Posterior vena cava (tissue), 2 donors: ENCODE measurements at regions of chr2 and their contacts with region 1.

Region 1: DNA sequence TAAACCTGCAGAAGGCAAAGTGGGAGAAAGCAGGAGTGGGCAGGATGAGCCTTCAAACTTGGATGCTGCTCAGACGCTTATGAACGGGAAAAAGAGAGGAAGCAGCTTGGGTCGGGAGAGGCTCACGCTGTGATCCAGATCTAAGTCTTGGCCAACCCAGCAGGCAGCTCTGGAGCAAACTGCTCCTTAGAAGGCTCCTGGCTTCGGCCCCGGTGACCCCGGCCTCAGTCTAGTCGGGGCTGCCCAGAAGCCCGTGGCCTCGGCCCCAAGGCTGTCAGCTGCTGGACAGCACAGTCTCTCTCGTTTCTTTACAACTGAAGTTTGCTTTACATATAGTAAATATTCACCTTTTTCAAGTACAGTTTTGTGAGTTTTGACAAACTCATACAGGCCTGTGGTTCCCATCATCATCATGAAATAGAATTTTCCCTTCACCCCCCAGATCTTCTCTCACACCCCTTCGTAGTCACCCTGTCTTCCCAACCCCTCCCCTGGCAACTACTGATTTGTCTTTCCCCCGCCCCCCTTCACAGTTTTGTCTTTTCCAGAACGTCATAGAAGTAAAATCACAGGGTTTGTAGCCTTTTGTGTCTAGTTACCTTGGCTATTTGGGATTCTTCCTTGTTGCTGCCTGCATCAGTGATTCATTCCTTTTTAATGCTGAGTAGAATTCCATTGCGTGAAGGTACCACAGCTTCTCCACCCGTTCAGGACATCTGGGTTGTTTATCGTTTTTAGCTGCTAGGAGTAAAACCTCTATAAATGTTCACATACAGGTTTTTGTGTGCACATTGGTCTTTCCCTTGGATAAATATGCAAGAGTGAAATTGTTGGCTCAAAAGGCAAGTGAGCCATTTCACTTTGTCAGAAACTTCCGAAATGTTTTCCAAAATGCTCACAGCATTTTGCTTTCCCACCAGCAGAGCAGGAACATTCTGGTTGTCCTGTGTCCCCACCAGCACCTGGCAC is 35.1 kb downstream of the MYO7B start:
- DNase-seq: no peak

Region 2: GRCh38 chr2:127078666-127079270 is 491.8 kb before region 1 on chr2:
- intact Hi-C with region 1: loop called in 1 of 2 experiments (anchors 5 kb)
- DNase-seq: no peak

Region 3: DNA sequence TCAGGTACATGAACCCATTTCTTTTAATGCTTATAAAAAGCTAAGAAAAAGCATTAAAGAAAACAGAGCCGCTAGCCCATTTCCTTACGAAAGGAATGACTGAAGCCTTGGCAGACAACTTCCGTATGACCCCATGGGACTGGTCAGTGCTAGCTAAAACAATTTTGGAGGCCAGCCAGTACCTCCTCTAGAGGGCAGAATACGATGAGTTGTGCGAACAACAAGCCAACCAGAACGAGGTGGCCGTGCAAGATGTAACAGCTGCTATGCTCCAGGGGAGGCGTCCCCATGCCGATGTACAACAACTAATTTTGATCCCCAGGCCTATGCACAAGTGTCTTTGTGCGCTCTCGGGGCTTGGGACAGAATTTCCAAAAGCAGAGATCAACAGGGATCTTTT is 199.5 kb before region 1 on chr2:
- intact Hi-C with region 1: loop called in 1 of 2 experiments (anchors 5 kb)
- DNase-seq: no peak

Region 4: GRCh38 chr2:127526149-127527000 is 44.2 kb before region 1 on chr2 and contains the start of gene IWS1:
- intact Hi-C with region 1: loop called in 1 of 2 experiments (anchors 2 kb)
- DNase-seq: peak; percentile 99
- total RNA-seq, gene IWS1: 31.0 to 35.4 TPM

Region 5: DNA sequence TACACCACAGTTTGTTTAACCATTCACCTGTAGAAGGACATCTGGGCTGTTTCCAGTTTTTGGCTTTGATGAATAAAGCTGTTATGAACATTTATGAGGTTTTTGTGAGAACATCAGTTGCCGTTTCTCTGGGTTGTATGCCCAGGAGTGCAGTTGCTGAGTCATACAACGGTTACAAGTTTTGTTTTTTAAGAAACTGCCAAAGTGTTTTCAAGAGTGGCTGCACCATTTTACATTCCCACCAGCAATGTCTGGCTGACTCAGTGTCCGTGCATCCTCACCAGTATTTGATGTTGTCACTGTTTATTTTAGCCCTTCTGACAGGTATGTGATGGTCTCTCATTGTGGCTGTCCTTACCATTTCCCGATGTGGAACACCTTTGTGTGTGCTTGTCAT is 27.4 kb after region 1 on chr2:
- intact Hi-C with region 1: loop called in 1 of 2 experiments (anchors 1 kb)
- DNase-seq: no peak

Region 6: DNA sequence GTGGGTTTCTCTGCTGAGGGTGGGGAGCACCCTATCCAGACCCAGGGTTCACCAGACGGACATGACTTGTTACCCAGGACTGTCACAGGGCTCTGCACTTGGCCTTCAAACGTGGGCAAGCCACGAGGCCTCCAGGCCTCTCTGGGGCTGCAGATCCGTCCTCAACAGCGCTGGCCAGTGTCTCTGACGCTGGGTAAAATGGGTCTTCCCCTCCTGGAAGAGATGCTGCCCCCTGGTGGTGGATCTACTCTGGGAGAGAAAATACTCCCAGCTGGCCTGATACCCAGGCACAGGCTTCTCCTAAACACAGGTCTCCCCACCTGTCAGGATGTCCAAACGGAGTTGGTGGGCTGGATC is 79.1 kb after region 1 on chr2:
- intact Hi-C with region 1: no loop called
- DNase-seq: peak; percentile 95

Region 7: GRCh38 chr2:128832946-128833663 is 1262.5 kb after region 1 on chr2:
- intact Hi-C with region 1: no loop called
- DNase-seq: no peak